Head of caudate nucleus (tissue), 42 donors: ENCODE measurements at regions of chr2 and their contacts with region 1.

Region 1: DNA sequence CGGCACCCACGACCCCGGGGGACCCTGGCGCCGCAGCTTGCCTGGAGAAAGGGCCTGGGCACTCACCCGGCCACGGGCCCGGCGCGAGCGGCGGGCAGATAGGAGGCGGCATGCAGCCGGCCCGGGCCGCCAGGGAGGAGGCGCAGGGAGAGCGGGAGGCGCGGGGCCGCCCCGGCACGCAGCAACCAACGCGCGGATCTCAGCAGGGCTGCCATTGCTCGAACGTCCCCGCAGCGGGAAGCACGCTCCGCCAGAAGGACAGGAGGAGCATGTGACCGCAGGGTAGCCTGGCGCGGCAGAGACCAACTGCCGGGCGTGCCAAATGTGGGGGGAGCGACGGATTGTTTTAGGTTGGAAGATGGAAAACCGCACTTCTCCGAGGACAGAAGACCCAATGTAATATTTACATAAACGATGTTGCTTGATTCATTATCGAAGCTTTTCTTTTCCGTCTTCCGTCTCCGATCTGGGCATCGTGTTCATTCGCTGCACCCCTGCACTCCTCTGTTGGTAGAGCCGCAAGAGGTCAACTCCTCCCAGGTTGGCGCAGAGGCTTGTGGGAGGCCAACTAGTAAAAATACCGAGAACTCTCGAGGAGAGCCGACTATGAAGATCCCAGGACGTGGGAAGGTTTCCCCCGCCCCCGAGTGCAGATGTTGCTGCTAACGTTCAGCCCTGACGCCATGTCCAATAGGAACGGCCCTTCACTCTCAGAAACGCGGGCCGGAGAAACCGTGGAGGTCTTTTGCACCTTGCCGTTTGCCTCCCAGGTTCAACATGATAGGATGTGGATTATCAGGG is at the start of gene LRPPRC:
- DNase-seq: peak; percentile 91 to 99 (median 95)

Region 2: DNA sequence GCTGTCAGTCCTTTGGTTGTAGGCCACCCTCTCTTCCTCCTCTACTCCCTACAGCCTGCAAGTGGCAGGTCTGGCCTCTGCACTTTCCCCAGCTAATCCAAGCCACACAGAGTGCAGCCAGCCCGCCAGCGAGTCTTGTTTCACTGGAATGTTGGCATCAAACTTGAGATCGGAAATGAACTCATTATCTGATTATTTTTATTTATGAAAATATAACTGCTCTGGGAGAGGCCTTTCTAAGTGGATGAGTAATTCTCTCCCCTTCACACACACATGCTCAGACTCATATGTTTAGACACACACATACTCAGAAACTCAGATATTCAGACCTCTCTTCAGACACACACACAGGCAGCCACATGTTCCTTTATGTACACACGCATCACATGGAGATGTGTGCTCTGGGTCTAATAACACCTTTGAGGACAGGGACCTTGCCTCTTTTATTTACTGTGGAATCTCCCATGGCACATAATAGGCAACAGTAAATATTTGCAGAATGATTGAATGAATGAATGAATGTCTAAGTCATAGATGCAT is 920.8 kb before region 1 on chr2:
- intact Hi-C with region 1: no loop called
- DNase-seq: peak in 1 of 42 donors; percentile 30

Region 3: GRCh38 chr2:44361330-44362206 is 365.6 kb after region 1 on chr2 and contains the starts of genes CAMKMT and PREPL:
- intact Hi-C with region 1: loop called (anchors 5 kb)
- DNase-seq: peak; percentile 93 to 99 (median 97)